ENCODE measurements at regions of chr17 and their contacts with region 1.

Region 1: DNA sequence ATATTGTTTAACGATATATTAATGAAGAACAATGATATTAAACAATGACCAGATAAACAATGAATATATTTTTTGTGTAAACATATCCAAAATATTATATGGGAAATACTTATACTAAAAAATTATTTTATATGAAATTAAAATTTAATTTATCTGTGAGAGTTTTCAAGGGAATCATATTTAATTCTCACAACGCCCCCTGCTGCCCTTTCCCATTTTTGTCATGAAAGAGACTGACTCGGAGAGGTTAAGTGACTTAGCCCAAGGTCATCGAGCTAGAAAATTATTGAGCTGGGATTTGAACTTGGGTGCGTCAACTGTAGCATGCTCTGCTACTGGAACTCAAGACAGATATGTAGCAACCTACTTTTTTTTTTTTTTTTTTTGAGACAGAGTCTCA is 7.2 kb upstream of the MYCBPAP start:
- DNase-seq: no peak
- H3K4me3 ChIP-seq: no peak overlapping the region
- CTCF ChIP-seq: peak; percentile 10

Region 2: DNA sequence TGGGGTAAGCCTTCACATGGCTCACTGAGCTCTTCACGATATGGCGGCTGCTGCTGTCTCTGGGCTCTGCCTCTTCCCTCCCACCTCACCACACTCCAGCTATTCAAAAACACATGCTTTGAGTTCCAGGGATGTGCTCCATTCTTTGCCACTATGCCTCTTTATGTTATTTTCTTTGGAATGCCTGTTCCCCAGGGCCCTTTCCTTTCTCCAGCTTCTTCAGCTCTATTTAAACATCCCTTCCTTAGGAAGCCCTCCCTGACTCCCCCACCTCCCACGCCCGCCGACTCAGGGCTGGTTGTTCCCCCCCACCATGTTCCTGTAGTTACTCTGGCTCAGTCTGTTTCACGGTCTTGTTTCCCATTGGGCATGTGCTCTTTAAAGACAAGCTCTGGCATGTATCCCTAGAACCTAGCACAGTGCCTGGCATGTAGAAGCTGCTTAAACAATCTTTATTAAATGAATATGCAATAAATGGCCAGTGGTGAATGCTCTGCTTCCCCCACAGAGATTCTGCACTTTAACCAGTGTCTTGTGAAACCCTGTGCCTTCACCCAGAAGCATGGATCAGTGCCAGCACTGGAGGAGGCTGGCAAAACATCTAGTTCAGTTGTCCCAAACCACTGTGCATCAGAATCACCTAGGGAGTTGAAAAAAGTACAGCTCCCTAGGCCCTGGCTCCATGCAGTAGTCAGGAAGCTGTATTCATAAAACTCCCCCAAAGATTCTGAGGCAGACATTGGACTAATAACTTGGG is 14.1 kb after region 1 on chr17:
- CTCF ChIA-PET with region 1: interaction called, 25 read pairs
- POLR2A ChIA-PET with region 1: no interaction called
- DNase-seq: no peak
- H3K4me3 ChIP-seq: no peak overlapping the region
- CTCF ChIP-seq: no peak